ENCODE measurements at regions of chr3 and their contacts with region 1.

Region 1: GRCh38 chr3:127690823-127691452 is 18.2 kb downstream of the ABTB1 start:
- DNase-seq: peak; percentile 48
- H3K4me3 ChIP-seq: no peak overlapping the region
- H3K27ac ChIP-seq: no peak overlapping the region
- H3K4me1 ChIP-seq: no peaks in the 10 kb centered on the region
- H3K27me3 ChIP-seq: no peaks in the 10 kb centered on the region
- CTCF ChIP-seq: peak; percentile 47 to 87
- POLR2A ChIP-seq: no peak

Region 2: GRCh38 chr3:127831723-127832172 is 140.8 kb after region 1 on chr3:
- CTCF ChIA-PET with region 1: interaction called, 74 read pairs
- POLR2A ChIA-PET with region 1: no interaction called
- dilution Hi-C with region 1: no loop called
- intact Hi-C with region 1: loop called (anchors 1 kb)
- DNase-seq: peak; percentile 35
- H3K4me3 ChIP-seq: no peak overlapping the region
- H3K27ac ChIP-seq: no peak overlapping the region
- H3K4me1 ChIP-seq: no peaks in the 10 kb centered on the region
- H3K27me3 ChIP-seq: no peaks in the 10 kb centered on the region
- CTCF ChIP-seq: peak; percentile 73 to 82
- POLR2A ChIP-seq: no peak

Region 3: GRCh38 chr3:127959846-127960245 is 268.9 kb after region 1 on chr3:
- CTCF ChIA-PET with region 1: interaction called, 33 read pairs
- POLR2A ChIA-PET with region 1: no interaction called
- dilution Hi-C with region 1: no loop called
- intact Hi-C with region 1: no loop called
- DNase-seq: peak; percentile 31
- H3K4me3 ChIP-seq: no peak overlapping the region
- H3K27ac ChIP-seq: no peak overlapping the region
- H3K4me1 ChIP-seq: no peaks in the 10 kb centered on the region
- H3K27me3 ChIP-seq: peaks cover 0 to 11% of the 10 kb centered on the region in 2 experiments
- CTCF ChIP-seq: peak in 1 of 2 donors; percentile 25
- POLR2A ChIP-seq: no peak